MCF 10A (cell line): ENCODE measurements at regions of chr6 and their contacts with region 1.

Region 1: GRCh38 chr6:43053545-43054205 is at the start of gene CUL7:
- DNase-seq: peak; percentile 97
- H3K4me3 Mint-ChIP-seq: peak within 1 kb of the TSS; percentile 96
- H3K27ac Mint-ChIP-seq: peak within 1 kb of the TSS; percentile 98
- H3K4me1 Mint-ChIP-seq: peaks cover 36% of the 10 kb centered on the region
- H3K27me3 Mint-ChIP-seq: no peaks in the 10 kb centered on the region
- CTCF ChIP-seq: no peak
- total RNA-seq, gene CUL7: 22.7 and 31.4 TPM in 2 replicates

Region 2: GRCh38 chr6:42796171-42796570 is 257.5 kb before region 1 on chr6:
- CTCF ChIA-PET with region 1: no interaction called
- POLR2A ChIA-PET with region 1: no interaction called
- intact Hi-C with region 1: no loop called
- DNase-seq: no peak
- H3K4me3 Mint-ChIP-seq: no peak overlapping the region
- H3K27ac Mint-ChIP-seq: no peak overlapping the region
- H3K4me1 Mint-ChIP-seq: peaks cover 19% of the 10 kb centered on the region
- H3K27me3 Mint-ChIP-seq: no peaks in the 10 kb centered on the region
- CTCF ChIP-seq: no peak

Region 3: DNA sequence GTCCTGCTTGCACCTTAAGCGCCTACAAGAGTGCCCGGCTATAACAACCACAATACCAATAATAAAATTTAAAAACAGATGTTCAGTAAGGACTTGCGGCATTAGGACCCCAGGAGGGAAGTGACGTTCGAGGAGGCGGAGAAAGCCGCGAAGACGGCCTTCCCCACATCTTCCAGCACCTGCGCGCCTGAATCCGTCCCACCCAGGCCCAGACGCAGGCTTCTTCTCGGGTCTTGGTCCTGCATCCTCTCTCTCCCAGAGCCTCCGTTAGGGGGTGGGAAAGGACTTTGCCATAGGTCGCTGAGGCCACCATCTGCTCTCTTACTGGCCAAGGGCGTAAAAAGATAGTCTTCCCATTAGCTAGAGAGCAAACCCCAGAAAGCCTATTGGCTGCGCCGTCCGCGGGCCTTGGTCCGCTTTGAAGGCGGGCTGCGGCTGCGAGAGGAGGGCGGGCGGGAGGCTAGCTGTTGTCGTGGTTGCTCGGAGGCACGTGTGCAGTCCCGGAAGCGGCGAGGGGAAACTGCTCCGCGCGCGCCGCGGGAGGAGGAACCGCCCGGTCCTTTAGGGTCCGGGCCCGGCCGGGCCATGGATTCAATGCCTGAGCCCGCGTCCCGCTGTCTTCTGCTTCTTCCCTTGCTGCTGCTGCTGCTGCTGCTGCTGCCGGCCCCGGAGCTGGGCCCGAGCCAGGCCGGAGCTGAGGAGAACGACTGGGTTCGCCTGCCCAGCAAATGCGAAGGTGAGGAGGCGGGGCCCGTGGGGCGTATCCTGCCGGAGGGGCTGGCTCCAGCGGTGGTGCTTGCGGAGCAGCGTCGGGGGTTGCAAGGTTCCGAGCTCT is 124.5 kb before region 1 on chr6 and contains the start of gene CNPY3:
- CTCF ChIA-PET with region 1: interaction called, 4 read pairs
- POLR2A ChIA-PET with region 1: interaction called, 20 read pairs
- intact Hi-C with region 1: no loop called
- DNase-seq: peak; percentile 97
- H3K4me3 Mint-ChIP-seq: peak within 1 kb of the TSS; percentile 99
- H3K27ac Mint-ChIP-seq: peak within 1 kb of the TSS; percentile 97
- H3K4me1 Mint-ChIP-seq: peaks cover 40% of the 10 kb centered on the region
- H3K27me3 Mint-ChIP-seq: no peaks in the 10 kb centered on the region
- CTCF ChIP-seq: no peak
- total RNA-seq, gene CNPY3: 21.9 and 22.5 TPM in 2 replicates

Region 4: DNA sequence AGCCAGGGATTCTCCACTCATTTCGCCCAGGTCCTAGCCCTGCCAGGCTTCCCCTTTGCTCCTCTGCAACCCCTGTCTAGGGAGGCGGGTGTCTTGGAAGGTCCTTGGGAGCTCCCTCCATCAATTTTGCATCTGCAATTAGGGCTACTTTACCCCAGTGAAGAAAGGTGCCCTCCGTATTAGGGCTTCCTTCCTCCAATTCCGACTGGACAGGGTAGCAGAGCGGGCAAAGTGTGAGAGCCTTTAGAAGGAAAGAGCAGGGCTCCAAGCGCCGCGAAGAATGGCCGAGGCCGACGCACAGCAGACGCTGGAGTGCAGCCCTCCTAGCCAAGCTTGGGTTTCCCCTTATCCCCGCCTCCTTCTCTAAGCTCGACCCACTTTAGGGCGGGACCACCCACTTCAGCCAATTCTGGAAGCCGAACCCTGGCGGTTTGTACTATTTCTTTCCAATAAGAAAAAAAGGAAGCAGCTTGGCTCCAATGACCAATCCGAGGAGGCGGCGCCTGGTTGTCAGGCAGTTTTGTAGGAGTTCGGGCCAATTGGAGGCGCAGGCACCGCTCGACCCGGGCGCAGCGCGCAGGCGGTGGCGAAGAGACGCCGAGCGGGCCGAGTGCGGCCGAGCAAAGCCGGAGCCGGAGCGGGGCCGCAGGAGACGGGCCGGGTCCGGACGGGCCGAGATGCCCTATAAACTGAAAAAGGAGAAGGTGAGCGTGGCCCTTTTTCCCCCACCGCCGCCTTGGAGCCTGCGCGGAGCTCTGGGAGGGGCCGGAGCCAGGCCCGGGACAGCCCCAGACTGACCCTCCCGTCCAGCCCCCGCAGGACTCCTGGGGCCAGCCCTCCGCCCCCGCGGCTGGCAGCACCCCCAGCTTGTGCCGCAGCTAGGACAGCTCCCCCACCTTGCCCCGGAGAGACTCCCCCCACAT is 69.4 kb before region 1 on chr6 and contains the start of gene PPP2R5D:
- CTCF ChIA-PET with region 1: interaction called, 3 read pairs
- POLR2A ChIA-PET with region 1: interaction called, 19 read pairs
- intact Hi-C with region 1: no loop called
- DNase-seq: peak; percentile 99
- H3K4me3 Mint-ChIP-seq: peak within 1 kb of the TSS; percentile 78
- H3K27ac Mint-ChIP-seq: peak within 1 kb of the TSS; percentile 90
- H3K4me1 Mint-ChIP-seq: peaks cover 39% of the 10 kb centered on the region
- H3K27me3 Mint-ChIP-seq: no peaks in the 10 kb centered on the region
- CTCF ChIP-seq: no peak
- total RNA-seq, gene PPP2R5D: 16.5 and 17.9 TPM in 2 replicates

Region 5: GRCh38 chr6:43043310-43043709 is 10.4 kb before region 1 on chr6:
- CTCF ChIA-PET with region 1: interaction called, 3 read pairs
- POLR2A ChIA-PET with region 1: interaction called, 11 read pairs
- intact Hi-C with region 1: no loop called
- DNase-seq: no peak
- H3K4me3 Mint-ChIP-seq: no peak overlapping the region
- H3K27ac Mint-ChIP-seq: no peak overlapping the region
- H3K4me1 Mint-ChIP-seq: no peaks in the 10 kb centered on the region
- H3K27me3 Mint-ChIP-seq: no peaks in the 10 kb centered on the region
- CTCF ChIP-seq: no peak

Region 6: DNA sequence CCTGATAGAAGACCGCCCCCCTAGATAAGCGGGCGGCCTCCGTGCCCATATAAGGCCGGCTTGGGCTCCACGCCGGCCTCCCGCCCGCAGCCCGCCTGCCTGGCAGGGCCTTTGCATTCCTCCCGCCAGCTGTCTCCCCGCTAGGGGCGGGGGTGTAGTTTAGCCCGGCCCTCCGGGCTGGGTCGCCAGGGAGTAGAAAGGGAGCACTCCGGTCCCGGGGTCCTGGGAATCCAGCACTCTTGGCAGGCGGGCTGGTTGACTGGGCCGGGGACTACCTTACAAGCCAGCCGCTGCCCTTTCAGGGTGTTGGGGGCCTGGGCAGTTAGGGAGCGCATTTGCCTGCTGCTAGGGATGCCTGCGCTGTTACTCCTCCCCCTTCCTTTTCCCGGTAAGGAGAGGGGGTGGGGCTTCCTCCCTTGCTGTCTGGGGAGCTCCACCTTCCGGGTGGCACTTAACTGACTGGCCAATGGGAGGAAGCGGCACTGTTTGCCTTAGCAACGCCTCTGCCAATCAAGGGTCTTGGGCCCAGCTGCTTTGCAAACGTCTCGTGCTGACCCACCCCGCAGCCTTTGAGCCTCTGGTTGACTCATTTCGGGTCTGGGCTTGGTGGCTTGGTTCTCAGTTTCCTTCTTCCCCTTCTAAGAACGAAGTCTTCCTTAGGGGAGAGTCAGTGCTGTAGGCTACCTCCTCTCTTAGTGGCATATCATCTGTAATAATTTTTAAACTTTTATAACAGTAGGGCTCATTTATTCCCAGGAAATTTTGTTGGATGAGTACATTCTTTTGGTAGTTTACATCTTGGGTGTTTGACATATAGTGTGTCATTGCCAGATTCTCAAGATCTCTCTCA is 120.8 kb after region 1 on chr6:
- CTCF ChIA-PET with region 1: no interaction called
- POLR2A ChIA-PET with region 1: interaction called, 44 read pairs
- intact Hi-C with region 1: no loop called
- DNase-seq: peak; percentile 99
- H3K4me3 Mint-ChIP-seq: peak overlapping the region; percentile 87
- H3K27ac Mint-ChIP-seq: peak overlapping the region; percentile 83
- H3K4me1 Mint-ChIP-seq: peaks cover 30% of the 10 kb centered on the region
- H3K27me3 Mint-ChIP-seq: no peaks in the 10 kb centered on the region
- CTCF ChIP-seq: no peak

Region 7: GRCh38 chr6:43547222-43547621 is 493.5 kb after region 1 on chr6:
- CTCF ChIA-PET with region 1: no interaction called
- POLR2A ChIA-PET with region 1: no interaction called
- intact Hi-C with region 1: no loop called
- DNase-seq: no peak
- H3K4me3 Mint-ChIP-seq: no peak overlapping the region
- H3K27ac Mint-ChIP-seq: no peak overlapping the region
- H3K4me1 Mint-ChIP-seq: no peaks in the 10 kb centered on the region
- H3K27me3 Mint-ChIP-seq: no peaks in the 10 kb centered on the region
- CTCF ChIP-seq: no peak